ENCODE measurements at regions of chr17 and their contacts with region 1.

Region 1: GRCh38 chr17:75855310-75856081 is at the start of gene WBP2:
- DNase-seq: peak; percentile 100
- ATAC-seq: peak; percentile 84
- H3K4me3 ChIP-seq: peak within 1 kb of the TSS; percentile 75 to 98 (median 94)
- H3K4me3 Mint-ChIP-seq: no peak within 1 kb of the TSS
- H3K27ac ChIP-seq: peak within 1 kb of the TSS; percentile 89 to 92
- H3K27ac Mint-ChIP-seq: no peak within 1 kb of the TSS
- H3K4me1 ChIP-seq: peaks cover 34 to 53% of the 10 kb centered on the region in 2 donors
- H3K4me1 Mint-ChIP-seq: peaks cover 42% of the 10 kb centered on the region
- H3K27me3 ChIP-seq: no peaks in the 10 kb centered on the region
- H3K27me3 Mint-ChIP-seq: no peaks in the 10 kb centered on the region
- CTCF ChIP-seq: peak; percentile 64
- total RNA-seq, gene WBP2: 132 and 140 TPM in 2 replicates

Region 2: GRCh38 chr17:75764711-75765421 is 90.6 kb before region 1 on chr17 and contains the start of gene GALK1:
- CTCF ChIA-PET with region 1: interaction called, 36 read pairs
- POLR2A ChIA-PET with region 1: interaction called, 7 read pairs
- intact Hi-C with region 1: loop called (anchors 1 kb)
- DNase-seq: peak; percentile 88
- ATAC-seq: peak; percentile 91
- H3K4me3 ChIP-seq: peak within 1 kb of the TSS; percentile 38 to 88 (median 83)
- H3K4me3 Mint-ChIP-seq: peak within 1 kb of the TSS; percentile 85
- H3K27ac ChIP-seq: peak within 1 kb of the TSS; percentile 15 to 72
- H3K27ac Mint-ChIP-seq: peak within 1 kb of the TSS; percentile 83
- H3K4me1 ChIP-seq: peaks cover 14 to 23% of the 10 kb centered on the region in 2 donors
- H3K4me1 Mint-ChIP-seq: peaks cover 18% of the 10 kb centered on the region
- H3K27me3 ChIP-seq: no peaks in the 10 kb centered on the region
- H3K27me3 Mint-ChIP-seq: no peaks in the 10 kb centered on the region
- CTCF ChIP-seq: peak; percentile 78
- total RNA-seq, gene GALK1: 29.8 and 33.9 TPM in 2 replicates

Region 3: DNA sequence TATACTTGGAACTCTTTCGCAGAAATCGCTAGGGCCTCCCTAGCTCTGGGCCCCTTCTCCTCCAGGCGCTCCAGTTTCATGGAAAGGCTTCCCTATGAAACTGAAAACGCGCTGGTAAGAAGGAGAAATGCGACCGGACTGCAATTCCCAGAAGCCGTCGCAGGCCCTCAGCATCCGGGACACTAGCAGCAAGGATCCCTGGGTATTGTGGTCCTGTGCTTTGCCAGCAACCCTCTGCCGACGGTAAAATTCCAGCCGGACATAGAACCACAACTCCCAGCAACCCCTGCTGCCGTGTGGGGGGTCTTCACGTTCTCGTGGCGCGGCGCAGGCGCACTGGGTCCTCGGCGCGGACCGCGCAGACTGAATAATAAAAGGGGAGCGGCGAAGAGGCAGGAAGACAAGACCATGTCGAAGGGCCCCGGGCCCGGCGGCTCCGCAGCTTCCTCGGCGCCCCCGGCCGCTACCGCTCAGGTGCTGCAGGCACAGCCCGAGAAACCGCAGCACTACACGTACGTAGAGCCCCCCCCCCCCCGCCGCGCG is 71.0 kb before region 1 on chr17 and contains the start of gene UNK:
- CTCF ChIA-PET with region 1: interaction called, 15 read pairs
- POLR2A ChIA-PET with region 1: interaction called, 31 read pairs
- intact Hi-C with region 1: loop called (anchors 1 kb)
- DNase-seq: peak; percentile 99
- ATAC-seq: peak; percentile 75
- H3K4me3 ChIP-seq: peak within 1 kb of the TSS; percentile 75 to 83 (median 81)
- H3K4me3 Mint-ChIP-seq: peak within 1 kb of the TSS; percentile 96
- H3K27ac ChIP-seq: peak within 1 kb of the TSS; percentile 100
- H3K27ac Mint-ChIP-seq: peak within 1 kb of the TSS; percentile 100
- H3K4me1 ChIP-seq: peaks cover 42 to 49% of the 10 kb centered on the region in 2 donors
- H3K4me1 Mint-ChIP-seq: peaks cover 53% of the 10 kb centered on the region
- H3K27me3 ChIP-seq: no peaks in the 10 kb centered on the region
- H3K27me3 Mint-ChIP-seq: no peaks in the 10 kb centered on the region
- CTCF ChIP-seq: no peak
- total RNA-seq, gene UNK: 70.3 and 82.3 TPM in 2 replicates

Region 4: DNA sequence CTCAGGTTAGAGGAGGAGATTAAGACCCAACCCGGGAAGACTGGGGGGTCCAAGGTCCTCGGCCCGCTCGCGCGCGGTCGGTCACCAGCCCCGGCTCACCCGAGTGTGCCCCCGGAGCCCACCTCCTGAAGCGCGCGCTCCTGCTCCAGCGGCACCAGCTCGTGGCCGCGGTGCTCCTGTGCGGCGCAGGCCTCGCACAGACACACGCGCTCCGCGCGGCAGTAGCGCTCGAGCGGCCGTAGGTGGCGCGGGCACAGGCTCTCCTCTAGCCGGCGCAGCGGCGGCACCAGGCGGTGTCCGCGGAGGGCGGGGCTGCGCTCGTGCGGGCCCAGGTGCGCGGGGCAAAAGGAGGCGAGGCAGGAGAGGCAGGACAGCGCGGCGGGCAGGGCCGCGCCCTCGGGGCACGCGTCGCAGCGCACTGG is 22.3 kb after region 1 on chr17:
- CTCF ChIA-PET with region 1: interaction called, 26 read pairs
- POLR2A ChIA-PET with region 1: interaction called, 24 read pairs
- intact Hi-C with region 1: loop called (anchors 1 kb)
- DNase-seq: peak; percentile 87
- ATAC-seq: peak; percentile 77
- H3K4me3 ChIP-seq: peak overlapping the region in 4 of 5 experiments; percentile 46 to 69 (median 52)
- H3K4me3 Mint-ChIP-seq: peak overlapping the region; percentile 90
- H3K27ac ChIP-seq: peak overlapping the region; percentile 44 to 55
- H3K27ac Mint-ChIP-seq: peak overlapping the region; percentile 91
- H3K4me1 ChIP-seq: peaks cover 30 to 39% of the 10 kb centered on the region in 2 donors
- H3K4me1 Mint-ChIP-seq: peaks cover 35% of the 10 kb centered on the region
- H3K27me3 ChIP-seq: peaks cover 0 to 7% (median 1%) of the 10 kb centered on the region in 4 experiments
- H3K27me3 Mint-ChIP-seq: peaks cover 4% of the 10 kb centered on the region
- CTCF ChIP-seq: peak; percentile 73

Region 5: DNA sequence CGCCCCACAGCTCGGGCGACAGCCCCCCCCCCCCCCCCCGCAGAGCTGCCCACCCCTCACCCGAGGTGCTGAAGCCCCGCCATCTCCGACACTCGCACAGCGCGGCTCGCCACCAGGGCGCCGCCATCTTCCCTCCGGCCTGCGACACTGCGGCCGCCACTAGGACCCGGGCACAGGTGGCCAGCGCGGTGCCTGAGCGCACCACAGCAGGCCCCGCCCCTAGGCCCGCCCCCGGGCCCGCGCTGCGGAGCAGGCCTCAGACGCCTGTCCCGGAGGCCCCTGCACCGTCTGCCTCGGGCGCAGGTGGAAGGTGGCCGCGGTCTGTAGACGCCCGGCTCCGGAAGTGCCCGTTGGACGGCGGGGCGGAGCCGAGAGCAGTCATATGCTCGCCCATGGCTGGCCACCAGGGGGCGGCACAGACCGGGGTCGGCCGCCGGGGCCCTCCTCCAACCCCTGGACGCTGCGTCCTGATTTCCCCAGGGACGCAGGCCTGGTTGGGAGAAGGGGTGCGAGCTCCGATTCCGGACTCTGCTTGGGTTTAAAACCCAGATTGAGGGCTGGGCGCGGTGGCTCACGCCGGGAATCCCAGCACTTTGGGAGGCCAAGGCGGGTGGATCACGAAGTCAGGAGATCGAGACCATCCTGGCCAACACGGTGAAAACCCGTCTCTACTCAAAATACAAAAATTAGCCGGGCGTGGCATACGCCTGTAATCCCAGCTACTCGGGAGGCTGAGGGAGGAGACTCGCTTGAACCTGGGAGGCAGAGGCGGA is 49.4 kb after region 1 on chr17 and contains the start of gene MRPL38:
- CTCF ChIA-PET with region 1: interaction called, 17 read pairs
- POLR2A ChIA-PET with region 1: interaction called, 4 read pairs
- intact Hi-C with region 1: loop called (anchors 1 kb)
- DNase-seq: peak; percentile 97
- ATAC-seq: peak; percentile 96
- H3K4me3 ChIP-seq: peak within 1 kb of the TSS; percentile 40 to 83 (median 79)
- H3K4me3 Mint-ChIP-seq: peak within 1 kb of the TSS; percentile 91
- H3K27ac ChIP-seq: peak within 1 kb of the TSS; percentile 79 to 83
- H3K27ac Mint-ChIP-seq: peak within 1 kb of the TSS; percentile 90
- H3K4me1 ChIP-seq: peaks cover 3 to 17% of the 10 kb centered on the region in 2 donors
- H3K4me1 Mint-ChIP-seq: peaks cover 8% of the 10 kb centered on the region
- H3K27me3 ChIP-seq: no peaks in the 10 kb centered on the region
- H3K27me3 Mint-ChIP-seq: no peaks in the 10 kb centered on the region
- CTCF ChIP-seq: peak; percentile 99
- total RNA-seq, gene MRPL38: 127 and 139 TPM in 2 replicates

Region 6: GRCh38 chr17:75978938-75979704 is 123.6 kb after region 1 on chr17 and contains the starts of genes ACOX1 and TEN1:
- CTCF ChIA-PET with region 1: interaction called, 3 read pairs
- POLR2A ChIA-PET with region 1: interaction called, 12 read pairs
- intact Hi-C with region 1: loop called (anchors 1 kb)
- DNase-seq: peak; percentile 98
- ATAC-seq: peak; percentile 93
- H3K4me3 ChIP-seq: peak within 1 kb of the TSS; percentile 73 to 100 (median 87)
- H3K4me3 Mint-ChIP-seq: peak within 1 kb of the TSS; percentile 94
- H3K27ac ChIP-seq: peak within 1 kb of the TSS; percentile 92 to 97
- H3K27ac Mint-ChIP-seq: peak within 1 kb of the TSS; percentile 98
- H3K4me1 ChIP-seq: peaks cover 9 to 19% of the 10 kb centered on the region in 2 donors
- H3K4me1 Mint-ChIP-seq: peaks cover 44% of the 10 kb centered on the region
- H3K27me3 ChIP-seq: no peaks in the 10 kb centered on the region
- H3K27me3 Mint-ChIP-seq: no peaks in the 10 kb centered on the region
- CTCF ChIP-seq: peak; percentile 35
- total RNA-seq, gene ACOX1: 31.2 and 38.8 TPM in 2 replicates
- total RNA-seq, gene TEN1: 19.8 and 25.5 TPM in 2 replicates

Region 7: DNA sequence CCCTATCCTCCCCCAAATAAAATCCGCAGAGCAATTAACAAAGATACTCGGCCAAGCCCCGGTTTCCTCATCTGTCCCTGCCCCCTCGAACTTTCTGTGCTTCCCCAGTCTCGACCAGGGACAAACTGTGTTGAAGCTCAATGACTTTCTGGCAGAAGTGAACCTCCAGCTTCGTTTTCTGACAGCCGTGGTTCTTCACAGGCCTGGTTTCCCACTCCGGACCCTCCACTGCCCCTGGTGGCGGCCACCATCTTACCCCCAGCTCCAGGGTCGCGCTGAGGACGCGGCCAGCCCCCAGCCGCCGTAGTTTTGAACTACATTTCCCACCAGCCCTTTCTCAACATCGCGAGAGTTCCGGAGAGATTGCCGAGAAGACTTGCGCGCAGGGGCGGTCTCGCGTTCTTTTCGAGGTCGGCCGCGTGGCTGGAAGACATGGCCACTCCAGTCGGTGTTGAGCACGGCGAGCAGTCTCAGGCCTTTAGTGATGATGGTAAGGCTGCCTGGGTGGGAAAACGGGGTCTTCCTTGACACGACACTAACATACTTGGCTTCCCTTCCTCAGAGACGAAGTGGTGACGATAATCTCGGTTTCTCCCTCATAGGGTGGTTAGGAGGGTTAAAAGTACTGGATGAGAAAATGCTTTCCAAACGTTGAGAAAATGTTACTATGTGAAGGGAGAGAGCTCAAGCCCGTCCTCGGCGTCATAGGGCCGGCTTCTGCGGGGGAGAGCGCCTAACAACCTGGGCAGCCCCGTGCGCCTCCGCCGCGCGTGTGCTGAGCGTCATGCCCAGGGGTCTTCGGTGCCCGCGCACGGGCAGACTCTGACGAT is 702.1 kb after region 1 on chr17:
- CTCF ChIA-PET with region 1: no interaction called
- POLR2A ChIA-PET with region 1: interaction called, 11 read pairs
- intact Hi-C with region 1: no loop called
- DNase-seq: peak; percentile 97
- ATAC-seq: peak; percentile 93
- H3K4me3 ChIP-seq: peak overlapping the region; percentile 76 to 94 (median 88)
- H3K4me3 Mint-ChIP-seq: peak overlapping the region; percentile 100
- H3K27ac ChIP-seq: peak overlapping the region; percentile 81 to 98
- H3K27ac Mint-ChIP-seq: peak overlapping the region; percentile 97
- H3K4me1 ChIP-seq: peaks cover 16 to 37% of the 10 kb centered on the region in 2 donors
- H3K4me1 Mint-ChIP-seq: peaks cover 63% of the 10 kb centered on the region
- H3K27me3 ChIP-seq: no peaks in the 10 kb centered on the region
- H3K27me3 Mint-ChIP-seq: no peaks in the 10 kb centered on the region
- CTCF ChIP-seq: peak; percentile 58

Measured in B cell (primary cell).